CD14-positive monocyte (primary cell): ENCODE measurements at regions of chr1 and their contacts with region 1.

Region 1: DNA sequence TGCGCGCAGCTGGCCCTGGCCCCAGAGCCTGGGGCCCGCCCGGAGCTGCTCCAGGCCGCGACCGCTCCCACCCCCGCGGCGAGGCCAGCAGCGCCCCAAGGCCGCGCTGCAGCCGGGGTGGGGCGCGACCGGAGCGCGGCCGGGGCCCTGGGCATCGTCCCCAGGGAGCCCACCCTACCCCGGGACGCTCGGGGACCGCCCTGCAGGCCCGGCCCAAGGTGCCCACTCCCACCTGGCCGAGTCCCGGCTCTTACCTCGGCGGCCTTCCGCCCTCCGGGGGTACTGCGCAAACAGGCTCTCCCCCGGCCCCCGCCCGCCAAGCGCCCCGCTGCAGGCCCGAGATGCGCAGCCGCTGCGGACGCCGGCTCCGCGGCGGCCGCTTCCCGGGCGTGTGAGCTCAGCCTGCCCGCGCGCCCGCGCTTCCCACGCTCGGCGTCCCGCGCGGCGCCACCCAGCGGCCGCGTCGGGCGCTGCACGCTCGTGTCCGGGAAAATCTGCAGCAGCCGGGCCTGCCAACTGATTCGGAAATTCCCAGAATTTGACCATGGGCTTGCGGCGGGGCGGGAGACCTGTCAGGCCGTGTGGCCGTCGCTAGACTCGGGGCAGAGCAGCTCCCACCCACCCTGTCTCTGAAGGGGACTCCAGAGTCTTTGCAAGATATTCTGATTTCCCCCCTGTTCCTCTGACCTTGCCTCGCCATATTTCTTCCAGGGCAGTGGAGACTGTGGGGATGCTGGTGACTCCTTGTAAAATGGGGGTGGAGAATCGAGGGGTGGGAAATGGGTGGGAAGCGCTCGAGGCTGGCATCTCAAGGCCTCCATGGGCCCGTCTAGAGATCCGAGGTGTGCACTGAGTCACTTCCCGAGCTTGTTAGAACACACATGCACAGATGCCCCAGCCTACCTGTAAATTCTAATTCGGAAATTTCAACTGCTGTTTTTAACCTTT is 41.9 kb downstream of the CD34 start:
- DNase-seq: peak; percentile 60 to 86 (median 72)
- H3K4me3 ChIP-seq: peak overlapping the region; percentile 81 to 97 (median 90)
- H3K4me3 Mint-ChIP-seq: peak overlapping the region; percentile 92 to 95
- H3K27ac ChIP-seq: peak overlapping the region; percentile 84 to 89
- H3K27ac Mint-ChIP-seq: peak overlapping the region in 6 of 7 donors; percentile 87 to 97 (median 96)
- H3K4me1 ChIP-seq: peaks cover 63 to 72% of the 10 kb centered on the region in 2 donors
- H3K4me1 Mint-ChIP-seq: peaks cover 69% of the 10 kb centered on the region
- H3K27me3 ChIP-seq: no peaks in the 10 kb centered on the region
- H3K27me3 Mint-ChIP-seq: peaks cover 0 to 2% (median 0%) of the 10 kb centered on the region in 3 donors
- CTCF ChIP-seq: peak; percentile 87

Region 2: DNA sequence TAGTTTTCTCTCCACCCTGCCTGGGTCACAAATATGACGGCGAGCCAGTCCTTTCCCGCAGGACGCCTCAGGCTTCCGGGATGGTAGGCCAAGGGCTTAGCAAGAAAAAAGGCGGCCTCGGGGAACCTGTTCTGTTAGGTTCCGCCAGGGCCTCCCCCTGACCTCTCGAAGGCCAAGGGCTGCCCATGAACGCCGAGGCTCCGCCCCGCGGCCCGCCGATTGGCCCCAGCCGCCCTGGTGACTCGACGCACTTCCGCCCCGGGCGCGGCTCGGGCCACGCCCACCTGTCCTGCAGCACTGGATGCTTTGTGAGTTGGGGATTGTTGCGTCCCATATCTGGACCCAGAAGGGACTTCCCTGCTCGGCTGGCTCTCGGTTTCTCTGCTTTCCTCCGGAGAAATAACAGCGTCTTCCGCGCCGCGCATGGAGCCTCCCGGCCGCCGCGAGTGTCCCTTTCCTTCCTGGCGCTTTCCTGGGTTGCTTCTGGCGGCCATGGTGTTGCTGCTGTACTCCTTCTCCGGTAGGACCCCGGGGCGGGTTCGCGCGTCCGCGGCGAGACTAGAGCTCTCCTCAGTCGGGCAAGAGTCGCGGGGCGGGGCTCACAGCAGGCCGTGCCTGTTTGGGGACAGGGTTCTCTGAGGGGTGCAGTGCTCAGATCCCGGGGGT is 117.1 kb before region 1 on chr1 and contains the start of gene CD46:
- intact Hi-C with region 1: loop called in 1 of 2 experiments (anchors 5 kb)
- DNase-seq: peak; percentile 95 to 98 (median 96)
- H3K4me3 ChIP-seq: peak within 1 kb of the TSS; percentile 54 to 94 (median 93)
- H3K4me3 Mint-ChIP-seq: peak within 1 kb of the TSS; percentile 100
- H3K27ac ChIP-seq: peak within 1 kb of the TSS; percentile 94 to 98
- H3K27ac Mint-ChIP-seq: peak within 1 kb of the TSS; percentile 97 to 100 (median 99)
- H3K4me1 ChIP-seq: peaks cover 46 to 48% of the 10 kb centered on the region in 2 donors
- H3K4me1 Mint-ChIP-seq: peaks cover 53% of the 10 kb centered on the region
- H3K27me3 ChIP-seq: no peaks in the 10 kb centered on the region
- H3K27me3 Mint-ChIP-seq: peaks cover 0 to 1% (median 0%) of the 10 kb centered on the region in 3 donors
- CTCF ChIP-seq: no peak
- polyA plus RNA-seq, gene CD46: 139 to 259 (median 210) TPM

Region 3: DNA sequence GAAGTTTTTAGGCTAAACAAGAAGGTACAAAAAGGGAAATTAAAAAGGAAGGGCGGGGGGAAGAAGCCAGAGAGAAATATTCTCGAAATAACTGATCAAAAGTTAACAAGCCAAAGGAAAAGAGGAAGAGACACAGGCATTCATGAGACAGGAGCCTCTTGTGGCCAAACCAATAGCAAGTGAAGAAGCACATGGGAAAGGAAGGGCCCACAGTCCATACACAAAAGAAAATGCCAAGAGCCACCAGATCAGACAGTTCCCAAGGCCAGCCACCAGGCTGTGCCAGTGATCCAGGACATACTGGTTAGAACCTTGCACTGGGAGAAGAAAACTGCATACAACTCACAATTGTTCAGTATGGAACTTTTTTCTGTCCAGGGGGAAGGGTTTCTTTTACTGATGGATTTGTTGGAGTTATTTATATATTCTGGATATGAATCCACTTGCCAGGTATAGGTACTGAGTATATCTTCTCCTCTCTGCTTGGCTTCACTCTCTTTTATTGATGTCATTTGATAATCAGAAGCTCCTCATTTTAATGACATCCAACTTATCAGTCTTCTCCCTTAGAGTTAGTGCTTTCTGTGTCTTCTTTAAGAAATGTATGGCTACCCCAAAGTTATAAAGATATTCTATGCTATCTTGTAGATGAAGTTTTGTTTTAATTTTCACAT is 40.4 kb before region 1 on chr1:
- intact Hi-C with region 1: loop called (anchors 1 to 2 kb)
- DNase-seq: peak; percentile 92 to 97 (median 96)
- H3K4me3 ChIP-seq: peak overlapping the region in 1 of 3 experiments; percentile 73
- H3K4me3 Mint-ChIP-seq: peak overlapping the region; percentile 43 to 74
- H3K27ac ChIP-seq: peak overlapping the region; percentile 42 to 98
- H3K27ac Mint-ChIP-seq: peak overlapping the region; percentile 96 to 99 (median 99)
- H3K4me1 ChIP-seq: peaks cover 76 to 88% of the 10 kb centered on the region in 2 donors
- H3K4me1 Mint-ChIP-seq: peaks cover 85% of the 10 kb centered on the region
- H3K27me3 ChIP-seq: no peaks in the 10 kb centered on the region
- H3K27me3 Mint-ChIP-seq: peaks cover 0 to 5% (median 4%) of the 10 kb centered on the region in 3 donors
- CTCF ChIP-seq: peak; percentile 95